ENCODE measurements at regions of chr6 and their contacts with region 1.

Region 1: GRCh38 chr6:30541515-30542403 is 14.5 kb downstream of the GNL1 start:
- DNase-seq: peak; percentile 74 to 85 (median 79)
- H3K4me3 ChIP-seq: peak overlapping the region; percentile 68
- H3K4me3 Mint-ChIP-seq: peak overlapping the region; percentile 83 to 90 (median 86)
- H3K27ac ChIP-seq: peak overlapping the region; percentile 55
- H3K27ac Mint-ChIP-seq: peak overlapping the region; percentile 84 to 97 (median 94)
- H3K4me1 ChIP-seq: peaks cover 33% of the 10 kb centered on the region
- H3K4me1 Mint-ChIP-seq: peaks cover 34 to 39% (median 37%) of the 10 kb centered on the region in 3 donors
- H3K27me3 ChIP-seq: no peaks in the 10 kb centered on the region
- H3K27me3 Mint-ChIP-seq: peaks cover 0 to under 1% of the 10 kb centered on the region in 2 donors

Region 2: DNA sequence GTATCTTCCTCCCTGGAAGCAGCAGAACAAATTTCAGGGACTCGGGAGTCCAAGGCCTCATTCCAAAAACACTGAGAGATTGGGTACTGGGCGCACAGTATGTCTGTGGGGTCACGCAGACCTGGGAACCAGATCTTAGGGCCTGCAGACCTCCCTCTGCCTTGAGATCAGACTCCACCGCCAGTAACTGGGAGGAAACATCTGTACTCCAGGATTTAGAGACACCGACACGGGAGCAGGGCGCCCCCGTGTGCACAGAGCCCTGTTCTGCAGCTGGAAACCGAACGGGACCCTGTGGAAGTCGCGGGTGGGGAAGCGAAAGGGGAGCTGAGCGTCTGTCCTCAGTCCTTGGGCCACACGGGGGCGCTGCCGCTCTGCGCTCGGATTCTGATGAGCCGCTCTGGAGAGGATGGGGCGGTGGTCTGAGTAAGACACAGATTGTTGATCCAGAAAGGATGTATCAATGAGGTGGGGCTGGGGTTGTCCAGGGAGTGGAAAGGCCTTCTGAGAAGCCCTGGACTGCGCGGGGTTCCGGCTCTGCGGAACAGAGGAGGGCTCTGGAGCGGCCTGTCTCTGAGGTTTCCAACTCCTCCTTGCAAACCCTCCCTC is 88.1 kb before region 1 on chr6:
- CTCF ChIA-PET with region 1: interaction called, 11 read pairs
- POLR2A ChIA-PET with region 1: interaction called, 4 read pairs
- DNase-seq: peak; percentile 72 to 89 (median 81)
- H3K4me3 ChIP-seq: no peak overlapping the region
- H3K4me3 Mint-ChIP-seq: peak overlapping the region in 5 of 7 donors; percentile 25 to 75 (median 50)
- H3K27ac ChIP-seq: no peak overlapping the region
- H3K27ac Mint-ChIP-seq: peak overlapping the region in 1 of 8 donors; percentile 58
- H3K4me1 ChIP-seq: peaks cover 35% of the 10 kb centered on the region
- H3K4me1 Mint-ChIP-seq: peaks cover 39 to 55% (median 47%) of the 10 kb centered on the region in 3 donors
- H3K27me3 ChIP-seq: peaks cover 67% of the 10 kb centered on the region
- H3K27me3 Mint-ChIP-seq: peaks cover 54 to 85% of the 10 kb centered on the region in 2 donors

Region 3: DNA sequence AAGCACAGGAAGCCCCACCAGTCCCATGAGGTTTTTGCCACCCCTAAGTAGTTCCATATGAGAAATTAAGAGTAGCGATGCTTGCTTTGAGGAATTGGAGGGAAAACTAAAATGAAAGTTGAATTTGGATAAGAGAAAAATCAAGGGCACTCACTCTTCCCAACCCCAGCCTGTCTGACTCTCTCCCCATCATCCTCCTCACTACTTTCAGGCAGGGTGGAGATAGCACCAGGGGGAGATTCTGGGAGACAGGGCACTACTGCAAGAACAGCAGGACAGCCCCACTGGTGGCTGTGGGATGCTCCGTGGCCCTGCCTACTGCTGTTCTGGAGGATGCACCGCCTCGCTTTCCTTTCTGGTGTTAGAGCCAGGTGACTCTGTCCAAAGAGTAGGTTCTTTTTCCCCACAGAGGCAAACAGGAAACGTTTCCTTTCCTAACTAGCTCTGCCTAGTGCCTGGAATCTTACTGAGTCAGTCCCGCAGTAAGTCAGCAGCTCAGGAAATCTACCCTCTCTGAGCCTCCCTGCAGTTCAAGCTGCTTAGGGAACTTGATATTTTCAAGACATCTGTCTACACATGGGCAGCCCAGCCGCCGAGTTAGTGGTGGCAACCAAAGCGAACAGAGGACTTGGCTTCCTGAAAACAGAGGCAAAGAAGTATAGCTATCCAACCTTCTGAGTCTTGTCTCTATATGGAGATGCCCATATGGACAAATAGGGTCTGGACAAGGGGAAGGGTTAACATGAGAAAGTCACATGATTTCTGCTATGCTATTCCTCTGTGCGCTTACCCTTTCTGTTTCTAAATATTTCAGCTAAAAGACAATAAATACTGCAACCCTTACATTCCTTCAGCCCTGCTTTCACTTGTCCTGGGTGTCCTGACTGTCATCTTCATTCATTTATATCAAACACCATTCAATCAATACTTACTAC is 41.1 kb before region 1 on chr6:
- CTCF ChIA-PET with region 1: interaction called, 21 read pairs
- POLR2A ChIA-PET with region 1: interaction called, 4 read pairs
- DNase-seq: no peak
- H3K4me3 ChIP-seq: peak overlapping the region; percentile 50
- H3K4me3 Mint-ChIP-seq: peak overlapping the region; percentile 11 to 71 (median 65)
- H3K27ac ChIP-seq: no peak overlapping the region
- H3K27ac Mint-ChIP-seq: peak overlapping the region in 6 of 8 donors; percentile 6 to 76 (median 66)
- H3K4me1 ChIP-seq: peaks cover 28% of the 10 kb centered on the region
- H3K4me1 Mint-ChIP-seq: peaks cover 30 to 44% (median 37%) of the 10 kb centered on the region in 3 donors
- H3K27me3 ChIP-seq: no peaks in the 10 kb centered on the region
- H3K27me3 Mint-ChIP-seq: no peaks in the 10 kb centered on the region

Region 4: GRCh38 chr6:30556066-30556905 is 14.5 kb after region 1 on chr6 and contains the start of gene GNL1:
- CTCF ChIA-PET with region 1: interaction called, 35 read pairs
- POLR2A ChIA-PET with region 1: interaction called, 8 read pairs
- DNase-seq: peak; percentile 99 to 100 (median 99)
- H3K4me3 ChIP-seq: peak within 1 kb of the TSS; percentile 97
- H3K4me3 Mint-ChIP-seq: peak within 1 kb of the TSS; percentile 94 to 100 (median 99)
- H3K27ac ChIP-seq: peak within 1 kb of the TSS; percentile 98
- H3K27ac Mint-ChIP-seq: peak within 1 kb of the TSS; percentile 98 to 100 (median 100)
- H3K4me1 ChIP-seq: peaks cover 13% of the 10 kb centered on the region
- H3K4me1 Mint-ChIP-seq: peaks cover 39 to 63% (median 58%) of the 10 kb centered on the region in 3 donors
- H3K27me3 ChIP-seq: no peaks in the 10 kb centered on the region
- H3K27me3 Mint-ChIP-seq: peaks cover 0 to 4% of the 10 kb centered on the region in 2 donors
- total RNA-seq, gene GNL1: 100 to 102 TPM

Region 5: GRCh38 chr6:30590994-30591393 is 49.2 kb after region 1 on chr6:
- CTCF ChIA-PET with region 1: interaction called, 137 read pairs
- POLR2A ChIA-PET with region 1: interaction called, 3 read pairs
- DNase-seq: no peak
- H3K4me3 ChIP-seq: no peak overlapping the region
- H3K4me3 Mint-ChIP-seq: no peak overlapping the region
- H3K27ac ChIP-seq: no peak overlapping the region
- H3K27ac Mint-ChIP-seq: peak overlapping the region in 4 of 8 donors; percentile 69 to 85 (median 72)
- H3K4me1 ChIP-seq: no peaks in the 10 kb centered on the region
- H3K4me1 Mint-ChIP-seq: peaks cover 2 to 13% (median 7%) of the 10 kb centered on the region in 3 donors
- H3K27me3 ChIP-seq: no peaks in the 10 kb centered on the region
- H3K27me3 Mint-ChIP-seq: no peaks in the 10 kb centered on the region

Region 6: GRCh38 chr6:30730601-30731435 is 189.1 kb after region 1 on chr6:
- CTCF ChIA-PET with region 1: interaction called, 31 read pairs
- POLR2A ChIA-PET with region 1: interaction called, 4 read pairs
- DNase-seq: peak; percentile 71 to 86 (median 73)
- H3K4me3 ChIP-seq: no peak overlapping the region
- H3K4me3 Mint-ChIP-seq: peak overlapping the region in 4 of 7 donors; percentile 23 to 43 (median 34)
- H3K27ac ChIP-seq: no peak overlapping the region
- H3K27ac Mint-ChIP-seq: peak overlapping the region in 7 of 8 donors; percentile 47 to 86 (median 65)
- H3K4me1 ChIP-seq: peaks cover 33% of the 10 kb centered on the region
- H3K4me1 Mint-ChIP-seq: peaks cover 23 to 49% (median 32%) of the 10 kb centered on the region in 3 donors
- H3K27me3 ChIP-seq: no peaks in the 10 kb centered on the region
- H3K27me3 Mint-ChIP-seq: no peaks in the 10 kb centered on the region

Measured in CD8-positive, alpha-beta memory T cell (primary cell).